HEK293T (cell line): ENCODE measurements at regions of chr13 and their contacts with region 1.

Region 1: GRCh38 chr13:51452361-51453206 is at the start of gene INTS6:
- DNase-seq: peak; percentile 15

Region 2: DNA sequence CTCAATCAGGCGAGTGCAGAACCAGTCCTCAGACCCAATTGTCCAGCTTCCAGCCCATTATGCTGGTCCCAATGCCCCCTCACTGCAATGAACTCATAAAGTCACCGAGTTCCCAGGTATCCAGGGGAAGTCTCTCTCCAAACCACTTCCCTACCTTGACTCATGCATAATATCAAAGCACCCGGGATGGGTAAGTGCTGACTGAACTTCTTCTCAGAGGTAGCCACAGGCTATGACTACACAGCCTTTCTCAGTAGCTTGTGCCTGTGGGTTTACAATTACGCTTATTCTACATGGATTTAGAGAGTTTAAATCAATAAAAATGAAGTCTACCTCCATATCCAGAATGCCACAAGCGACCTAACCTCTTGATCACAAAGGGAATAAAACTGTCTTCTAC is 339.8 kb before region 1 on chr13:
- CTCF ChIA-PET with region 1: no interaction called
- POLR2A ChIA-PET with region 1: no interaction called
- DNase-seq: no peak

Region 3: DNA sequence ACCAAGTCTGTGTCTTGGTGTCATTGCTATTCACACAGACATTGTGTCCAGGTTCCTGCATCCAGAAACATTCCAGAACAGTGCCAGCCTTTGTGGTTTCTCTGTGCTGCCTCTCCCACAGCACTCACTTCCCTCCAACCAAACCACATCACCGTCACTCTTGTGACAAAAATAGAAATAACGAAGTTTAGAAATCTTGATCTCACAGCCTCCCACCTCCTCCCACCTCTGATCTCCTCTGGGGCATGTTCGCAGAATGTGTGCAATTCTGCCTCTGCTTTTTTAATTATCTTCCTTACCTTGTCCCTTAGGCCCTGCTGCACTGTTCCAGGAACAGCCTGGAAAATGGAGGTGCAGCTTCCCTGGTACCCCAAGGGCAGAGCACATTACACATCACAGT is 121.8 kb before region 1 on chr13:
- CTCF ChIA-PET with region 1: no interaction called
- POLR2A ChIA-PET with region 1: no interaction called
- DNase-seq: no peak

Region 4: DNA sequence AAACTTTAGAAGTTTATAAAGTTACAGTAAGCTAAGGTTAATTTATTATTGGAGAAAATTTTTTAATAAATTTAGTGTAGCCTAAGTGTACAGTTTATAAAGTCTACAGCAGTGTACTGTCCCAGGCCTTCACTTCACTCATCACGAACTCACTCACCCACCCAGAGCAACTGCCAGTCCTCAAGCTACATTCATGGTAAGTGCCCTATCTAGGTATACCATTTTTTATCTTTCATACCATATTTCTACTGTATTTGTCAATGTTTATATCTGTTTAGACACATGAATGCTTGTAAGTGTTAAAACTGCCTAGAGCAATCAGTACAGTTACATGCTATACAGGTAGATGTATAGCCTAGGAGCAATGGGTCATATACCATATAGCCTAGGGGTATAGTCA is 12.2 kb before region 1 on chr13:
- CTCF ChIA-PET with region 1: no interaction called
- POLR2A ChIA-PET with region 1: interaction called, 10 read pairs
- DNase-seq: no peak

Region 5: GRCh38 chr13:51475727-51476501 is 23.3 kb after region 1 on chr13:
- CTCF ChIA-PET with region 1: no interaction called
- POLR2A ChIA-PET with region 1: interaction called, 20 read pairs
- DNase-seq: no peak

Region 6: DNA sequence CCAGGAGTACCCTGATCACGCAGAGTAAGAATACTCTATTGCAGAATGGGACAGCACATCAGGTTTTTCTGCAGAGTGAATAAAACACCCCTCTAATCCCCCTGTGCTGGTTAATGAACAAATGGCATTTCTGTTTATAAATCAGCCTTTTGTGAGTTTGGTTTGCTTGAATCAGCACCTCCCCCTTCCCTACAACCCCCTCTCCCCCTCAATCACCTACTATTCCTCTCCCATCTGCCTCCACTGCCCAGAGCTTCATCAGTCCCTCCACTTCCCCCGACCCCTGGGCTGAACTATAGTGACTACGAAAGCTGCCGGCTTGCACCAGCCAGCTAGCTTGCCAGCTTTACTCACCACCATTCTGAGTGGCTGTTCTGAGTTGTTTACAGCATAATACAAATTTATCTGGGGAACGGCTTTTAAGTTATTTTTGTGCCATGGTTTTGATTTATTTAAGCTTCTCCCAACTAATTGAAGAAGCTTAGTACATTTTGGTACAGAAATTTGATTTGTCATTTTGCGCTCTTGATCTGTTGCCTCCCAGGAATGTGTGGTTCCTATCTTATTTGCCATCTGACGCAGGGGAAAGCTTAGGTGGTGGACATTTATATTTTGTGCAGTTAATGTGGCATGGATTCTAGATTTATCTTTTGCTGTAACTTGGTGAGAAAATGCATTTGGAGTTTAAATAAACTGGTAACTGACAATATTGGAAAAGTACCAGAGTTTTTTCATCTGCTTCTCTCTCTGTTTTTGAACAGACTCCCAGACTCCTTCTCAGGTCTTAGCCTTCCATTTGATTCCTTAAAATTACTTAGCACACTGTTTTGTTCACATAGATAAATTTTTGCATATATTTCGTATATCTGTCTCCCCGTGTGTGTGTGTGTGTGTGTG is 90.0 kb after region 1 on chr13:
- CTCF ChIA-PET with region 1: no interaction called
- POLR2A ChIA-PET with region 1: interaction called, 16 read pairs
- DNase-seq: peak; percentile 44

Region 7: DNA sequence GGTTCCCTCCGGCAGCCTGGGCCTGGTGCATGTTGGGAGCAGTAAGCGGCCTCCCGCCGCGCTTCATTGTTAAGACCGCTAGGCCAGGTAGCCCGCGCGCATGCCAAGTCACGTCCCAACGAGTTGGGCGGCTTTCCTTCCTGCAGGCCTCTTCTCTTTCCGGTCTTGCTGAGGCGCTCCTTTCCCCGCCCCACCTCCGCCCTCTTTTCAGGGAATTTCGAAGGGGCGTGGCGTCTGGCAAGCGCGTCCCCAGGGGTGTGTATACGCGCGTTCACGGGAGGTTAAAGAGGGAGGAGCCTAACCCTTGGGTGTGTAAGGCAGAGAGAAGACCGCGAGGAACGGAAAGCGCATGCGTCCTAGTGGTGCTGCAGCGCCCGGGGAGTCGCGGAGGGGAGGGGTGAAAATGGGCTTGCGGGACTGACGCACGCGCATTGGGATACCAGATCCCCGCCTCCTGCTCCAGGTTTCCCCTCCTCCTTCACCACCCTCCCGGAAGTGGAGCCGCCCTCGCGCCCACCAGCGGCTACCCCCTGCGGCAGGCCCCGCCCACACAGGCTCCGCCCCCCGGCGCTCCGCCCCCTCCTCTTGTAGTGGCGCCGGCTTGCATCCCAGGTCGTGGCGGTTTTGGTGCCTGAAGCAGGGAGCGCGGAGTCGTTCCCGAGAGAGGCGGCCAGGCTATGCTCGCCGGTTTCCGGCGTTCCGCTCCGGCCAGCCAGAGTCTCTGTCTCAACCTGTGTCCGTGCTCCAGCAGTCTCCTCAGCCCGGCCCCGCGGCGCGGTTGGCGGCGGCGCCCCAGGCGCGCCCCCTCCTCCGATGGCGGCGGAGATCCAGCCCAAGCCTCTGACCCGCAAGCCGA is 131.5 kb after region 1 on chr13 and contains the start of gene WDFY2:
- CTCF ChIA-PET with region 1: no interaction called
- POLR2A ChIA-PET with region 1: interaction called, 20 read pairs
- DNase-seq: peak; percentile 96

Region 8: GRCh38 chr13:53191091-53191490 is 1738.5 kb after region 1 on chr13:
- CTCF ChIA-PET with region 1: no interaction called
- POLR2A ChIA-PET with region 1: no interaction called
- DNase-seq: no peak